Prostate gland (tissue), 2 donors: ENCODE measurements at regions of chr14 and their contacts with region 1.

Region 1: DNA sequence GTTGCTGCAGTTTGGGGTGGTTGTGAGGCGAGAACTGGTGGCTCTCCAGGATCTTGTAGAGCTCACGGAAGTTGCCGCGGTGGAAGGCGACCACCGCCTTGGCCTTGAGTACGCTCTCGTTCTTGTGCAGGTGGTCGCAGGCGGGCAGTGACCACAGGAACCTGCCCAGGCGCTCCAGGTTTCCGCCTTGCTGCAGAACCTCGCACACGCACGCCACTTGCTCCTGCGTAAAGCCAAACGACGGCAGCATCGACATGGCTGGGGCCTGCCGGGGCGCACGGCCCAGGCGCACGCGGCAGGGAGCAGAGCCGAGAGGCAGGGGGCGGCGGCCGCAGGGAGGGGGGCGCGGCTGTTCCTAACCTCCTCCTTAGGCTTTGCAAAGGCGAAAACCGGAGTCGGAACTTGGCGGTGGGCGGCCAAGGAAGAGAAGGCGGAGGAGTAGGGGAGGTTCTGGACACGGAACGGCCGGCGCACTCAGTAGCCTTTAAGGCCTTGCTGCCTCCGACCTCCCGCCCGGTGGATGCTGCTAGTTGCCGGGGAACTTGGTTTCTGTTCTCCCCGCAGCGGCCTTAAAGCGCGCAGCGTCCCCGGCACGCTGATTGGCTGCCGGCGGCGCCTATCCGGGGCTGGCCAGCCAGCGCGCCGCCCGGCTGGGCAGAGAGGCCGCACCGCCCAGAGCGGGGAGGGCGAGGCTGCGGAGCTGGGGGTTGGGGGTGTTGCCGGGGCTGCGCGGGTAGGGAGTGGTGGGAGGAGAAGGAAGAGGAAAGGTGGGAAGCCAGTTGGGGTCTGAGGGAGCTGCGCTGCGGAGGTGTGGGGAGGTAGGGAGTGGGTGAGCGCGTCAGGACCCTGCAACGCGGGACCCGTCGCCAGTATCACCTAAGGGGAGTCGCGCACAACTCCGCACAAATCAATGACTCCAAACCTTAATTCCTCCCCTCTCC is at the start of gene SIX1:
- DNase-seq: peak; percentile 90
- H3K4me3 ChIP-seq: peak within 1 kb of the TSS; percentile 46 to 76
- H3K27ac ChIP-seq: peak within 1 kb of the TSS; percentile 86 to 92
- H3K4me1 ChIP-seq: no peaks in the 10 kb centered on the region
- H3K27me3 ChIP-seq: no peaks in the 10 kb centered on the region
- CTCF ChIP-seq: peak in 2 of 4 experiments; percentile 19 to 32
- POLR2A ChIP-seq: peak; percentile 96
- total RNA-seq, gene SIX1: 23.5 to 25.0 TPM

Region 2: GRCh38 chr14:59688224-59689170 is 960.7 kb before region 1 on chr14:
- intact Hi-C with region 1: no loop called
- DNase-seq: no peak
- H3K4me3 ChIP-seq: no peak overlapping the region
- H3K27ac ChIP-seq: no peak overlapping the region
- H3K4me1 ChIP-seq: no peaks in the 10 kb centered on the region
- H3K27me3 ChIP-seq: no peaks in the 10 kb centered on the region
- CTCF ChIP-seq: peak in 2 of 4 experiments; percentile 12 to 13
- POLR2A ChIP-seq: no peak

Region 3: GRCh38 chr14:60248697-60249318 is 400.4 kb before region 1 on chr14 and contains the start of gene PPM1A:
- intact Hi-C with region 1: loop called (anchors 5 kb)
- DNase-seq: peak; percentile 95
- H3K4me3 ChIP-seq: peak within 1 kb of the TSS; percentile 90 to 95
- H3K27ac ChIP-seq: peak within 1 kb of the TSS; percentile 99
- H3K4me1 ChIP-seq: peaks cover 7% of the 10 kb centered on the region
- H3K27me3 ChIP-seq: no peaks in the 10 kb centered on the region
- CTCF ChIP-seq: no peak
- POLR2A ChIP-seq: peak; percentile 87
- total RNA-seq, gene PPM1A: 41.4 to 50.6 TPM

Region 4: DNA sequence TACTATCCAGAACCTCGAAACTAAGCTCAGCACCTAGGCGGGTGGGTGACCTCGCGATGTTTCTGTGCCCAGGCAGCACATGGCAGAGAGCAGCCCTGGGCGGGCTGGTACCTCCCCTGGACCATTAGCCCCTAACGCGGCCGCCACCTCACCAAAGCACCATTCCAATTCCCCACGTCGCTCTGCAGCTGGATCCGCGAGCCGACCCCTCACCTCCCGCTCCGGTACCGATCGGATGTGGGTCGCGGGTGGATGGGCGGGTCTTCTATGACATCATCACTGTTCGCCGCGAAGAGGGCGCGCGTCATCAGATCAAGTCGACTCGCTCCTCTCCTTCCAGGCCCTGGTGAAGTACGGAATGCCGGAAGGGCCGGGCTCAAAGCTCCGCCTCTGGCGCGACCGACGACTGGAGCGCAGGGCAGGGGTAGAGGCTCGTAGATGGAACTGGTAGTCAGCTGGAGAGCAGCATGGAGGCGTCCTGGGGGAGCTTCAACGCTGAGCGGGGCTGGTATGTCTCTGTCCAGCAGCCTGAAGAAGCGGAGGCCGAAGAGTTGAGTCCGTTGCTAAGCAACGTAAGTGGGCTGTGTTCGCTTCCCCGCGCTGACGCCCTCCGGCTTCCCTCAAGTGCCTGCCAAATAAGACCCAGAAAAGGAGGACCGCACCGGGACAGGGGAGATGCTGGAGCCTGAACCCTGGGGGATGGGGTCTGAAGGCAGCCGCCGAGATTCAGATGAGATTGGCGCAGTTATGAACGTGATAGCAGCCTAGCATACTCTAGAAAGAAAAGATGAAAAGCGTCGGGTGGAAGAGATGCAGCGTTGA is 331.8 kb after region 1 on chr14 and contains the starts of genes SLC38A6 and TRMT5:
- intact Hi-C with region 1: loop called (anchors 5 kb)
- DNase-seq: peak; percentile 94
- H3K4me3 ChIP-seq: peak within 1 kb of the TSS; percentile 70 to 86
- H3K27ac ChIP-seq: peak within 1 kb of the TSS; percentile 85 to 86
- H3K4me1 ChIP-seq: no peaks in the 10 kb centered on the region
- H3K27me3 ChIP-seq: no peaks in the 10 kb centered on the region
- CTCF ChIP-seq: peak in 2 of 4 experiments; percentile 11 to 16
- POLR2A ChIP-seq: peak; percentile 62
- total RNA-seq, gene SLC38A6: 13.7 to 15.1 TPM
- total RNA-seq, gene TRMT5: 8.1 to 18.4 TPM